HEK293 (cell line): ENCODE measurements at regions of chr2 and their contacts with region 1.

Region 1: DNA sequence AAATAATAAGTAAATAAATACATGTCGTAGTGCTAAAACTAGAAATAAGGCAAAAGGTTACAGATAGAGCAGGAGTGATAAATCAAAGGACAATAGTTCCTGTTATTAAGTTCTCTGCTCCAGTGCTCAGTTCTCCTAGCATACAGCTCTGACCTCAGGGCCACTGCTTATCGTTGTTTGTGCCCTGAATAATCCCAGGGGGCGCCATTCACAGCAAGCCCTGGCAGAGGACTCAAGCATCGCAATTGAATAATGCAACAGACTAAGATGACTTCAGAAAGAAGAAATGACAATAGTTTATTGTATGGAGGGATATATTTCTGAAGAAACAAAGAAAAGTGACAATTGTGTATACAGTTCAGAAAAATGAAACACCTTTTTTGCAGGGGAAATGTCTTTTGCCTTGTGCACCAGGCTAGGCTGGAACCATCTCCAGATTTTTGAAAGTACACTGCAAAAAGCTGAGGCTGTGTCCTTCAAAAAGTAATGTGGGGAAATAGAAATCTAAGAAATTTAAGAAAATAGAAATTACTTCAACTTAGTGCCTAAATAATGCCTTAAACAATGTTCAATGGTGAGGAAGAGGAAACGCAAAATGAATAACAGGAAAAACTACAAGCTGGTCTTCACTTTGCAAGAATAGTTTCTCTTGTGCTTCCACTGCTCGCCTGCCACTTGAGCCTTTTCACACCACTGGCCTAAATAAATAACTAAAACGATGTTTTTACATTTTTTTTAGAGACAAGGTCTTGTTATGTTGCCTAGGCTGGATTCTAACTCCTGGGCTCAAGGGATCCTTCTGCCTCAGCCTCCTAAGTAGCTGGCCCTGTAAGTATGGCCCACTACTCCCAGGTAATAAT is 19.0 kb upstream of the CCNYL1 start:
- H3K4me3 ChIP-seq: no peak overlapping the region
- H3K27ac ChIP-seq: no peak overlapping the region
- H3K4me1 ChIP-seq: no peaks in the 10 kb centered on the region
- CTCF ChIP-seq: no peak

Region 2: GRCh38 chr2:207734264-207734635 is 41.8 kb after region 1 on chr2:
- CTCF ChIA-PET with region 1: interaction called, 13 read pairs
- POLR2A ChIA-PET with region 1: no interaction called
- H3K4me3 ChIP-seq: no peak overlapping the region
- H3K27ac ChIP-seq: no peak overlapping the region
- H3K4me1 ChIP-seq: no peaks in the 10 kb centered on the region
- CTCF ChIP-seq: peak; percentile 72